ENCODE measurements at regions of chr21 and their contacts with region 1.

Region 1: GRCh38 chr21:42539931-42540343 is 26.3 kb downstream of the SLC37A1 start:
- DNase-seq: no peak
- H3K4me3 ChIP-seq: no peak overlapping the region
- H3K27ac ChIP-seq: no peak overlapping the region
- H3K4me1 ChIP-seq: peaks cover 6 to 28% (median 23%) of the 10 kb centered on the region in 6 donors
- H3K27me3 ChIP-seq: no peaks in the 10 kb centered on the region
- CTCF ChIP-seq: no peak
- POLR2A ChIP-seq: no peak

Region 2: GRCh38 chr21:42233067-42233961 is 306.6 kb before region 1 on chr21:
- intact Hi-C with region 1: no loop called
- DNase-seq: peak; percentile 91
- H3K4me3 ChIP-seq: peak overlapping the region in 2 of 8 donors; percentile 1 to 68
- H3K27ac ChIP-seq: peak overlapping the region; percentile 36 to 93 (median 88)
- H3K4me1 ChIP-seq: peaks cover 79 to 100% (median 97%) of the 10 kb centered on the region in 6 donors
- H3K27me3 ChIP-seq: no peaks in the 10 kb centered on the region
- CTCF ChIP-seq: peak in 10 of 11 experiments; percentile 29 to 70 (median 53)
- POLR2A ChIP-seq: no peak

Region 3: DNA sequence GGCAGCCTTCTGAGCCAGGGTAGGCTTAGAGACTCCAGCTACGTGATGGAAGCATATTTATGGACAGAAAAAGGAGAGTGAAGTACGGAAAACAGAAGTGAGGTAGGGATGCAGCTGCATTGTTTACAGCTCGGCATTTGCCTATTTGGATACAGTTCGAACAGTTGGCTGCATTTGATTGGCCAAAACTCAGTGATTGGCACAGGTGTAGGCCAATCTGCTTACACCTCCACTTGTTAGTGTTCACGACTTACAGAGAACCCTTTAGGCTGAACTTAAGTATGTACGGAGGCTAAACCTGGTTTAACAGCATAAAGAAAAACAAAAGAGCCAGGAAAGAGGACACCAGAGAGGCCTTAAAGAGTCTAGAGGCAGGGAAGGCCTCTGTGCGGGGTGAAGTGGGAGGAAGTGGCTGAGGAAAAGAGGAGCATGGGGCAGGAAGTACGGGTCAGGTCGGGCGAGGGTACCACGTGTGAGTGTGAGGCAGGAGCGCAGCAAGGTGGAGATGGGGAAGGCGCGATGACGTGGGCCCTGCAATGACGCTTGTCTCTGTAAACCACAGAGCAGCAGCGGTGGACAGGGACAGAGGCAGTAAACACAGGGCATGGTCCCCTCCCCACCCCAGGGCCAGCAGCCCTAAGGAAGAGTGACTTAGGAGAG is 75.9 kb before region 1 on chr21:
- intact Hi-C with region 1: no loop called
- DNase-seq: peak; percentile 86
- H3K4me3 ChIP-seq: peak overlapping the region in 1 of 8 donors; percentile 28
- H3K27ac ChIP-seq: peak overlapping the region in 4 of 8 donors; percentile 15 to 53 (median 44)
- H3K4me1 ChIP-seq: peaks cover 3 to 79% (median 58%) of the 10 kb centered on the region in 6 donors
- H3K27me3 ChIP-seq: peaks cover 0 to 5% (median 0%) of the 10 kb centered on the region in 7 donors
- CTCF ChIP-seq: no peak
- POLR2A ChIP-seq: no peak

Region 4: GRCh38 chr21:42964546-42965225 is 424.7 kb after region 1 on chr21:
- intact Hi-C with region 1: loop called (anchors 10 kb)
- DNase-seq: peak; percentile 27
- H3K4me3 ChIP-seq: no peak overlapping the region
- H3K27ac ChIP-seq: no peak overlapping the region
- H3K4me1 ChIP-seq: no peaks in the 10 kb centered on the region
- H3K27me3 ChIP-seq: no peaks in the 10 kb centered on the region
- CTCF ChIP-seq: no peak
- POLR2A ChIP-seq: no peak

Measured in spleen (tissue), 13 donors.